ENCODE measurements at regions of chr1 and their contacts with region 1.

Region 1: DNA sequence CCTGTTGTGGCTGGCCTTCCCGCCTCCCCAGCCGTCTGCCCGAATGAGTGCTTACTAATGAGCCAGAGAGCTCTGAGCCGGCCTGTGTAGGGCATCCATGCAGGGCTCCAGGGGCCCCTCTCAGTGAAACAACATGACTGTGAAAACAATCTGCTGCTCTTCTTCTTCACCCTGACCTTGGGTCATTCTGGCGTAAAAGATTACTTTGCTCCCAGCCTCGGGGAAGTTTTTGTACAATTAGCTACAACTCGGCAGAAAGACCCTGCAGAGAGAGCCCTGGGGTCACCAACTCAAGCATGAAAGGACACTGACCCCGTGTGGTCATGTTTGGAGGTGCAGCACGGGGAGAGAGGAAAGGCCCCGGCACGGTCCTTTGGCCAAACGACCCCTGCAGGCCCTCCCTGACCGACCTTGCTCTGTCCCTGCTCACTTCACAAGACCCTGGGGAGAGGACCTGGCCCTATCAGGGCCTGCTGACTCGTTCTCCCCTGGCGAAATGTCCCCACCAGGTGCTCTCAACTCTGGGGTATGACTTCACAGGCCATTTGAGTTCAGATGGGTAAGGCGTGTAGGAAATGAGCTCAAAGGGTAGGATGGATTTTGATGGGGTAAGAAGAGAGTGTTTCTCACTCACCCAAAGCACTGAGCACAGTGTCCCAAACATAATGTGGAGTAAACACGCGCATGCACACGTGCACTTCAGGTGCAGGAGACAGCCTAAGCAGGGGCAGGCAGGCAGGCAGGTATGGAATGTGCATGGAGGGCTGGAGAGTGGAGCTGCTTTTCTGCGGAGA is 22.9 kb upstream of the FAM20B start:
- DNase-seq: peak in 9 of 10 donors; percentile 64 to 77 (median 72)
- H3K4me3 ChIP-seq: peak overlapping the region in 26 of 59 donors; percentile 2 to 47 (median 27)
- H3K27ac ChIP-seq: peak overlapping the region in 1 of 59 donors; percentile 44
- H3K27me3 ChIP-seq: no peaks in the 10 kb centered on the region
- CTCF ChIP-seq: peak; percentile 86 to 99 (median 95)

Region 2: GRCh38 chr1:178532392-178532791 is 470.4 kb before region 1 on chr1:
- intact Hi-C with region 1: loop called in 1 of 2 experiments (anchors 2 kb)
- DNase-seq: peak; percentile 77 to 91 (median 88)
- H3K4me3 ChIP-seq: peak overlapping the region in 19 of 59 donors; percentile 5 to 42 (median 19)
- H3K27ac ChIP-seq: no peak overlapping the region
- H3K27me3 ChIP-seq: peaks cover 0 to 4% (median 0%) of the 10 kb centered on the region in 45 donors
- CTCF ChIP-seq: peak; percentile 56 to 96 (median 90)

Region 3: GRCh38 chr1:178542560-178543356 is 460.0 kb before region 1 on chr1:
- intact Hi-C with region 1: loop called in 1 of 2 experiments (anchors 5 kb)
- DNase-seq: peak; percentile 75 to 94 (median 82)
- H3K4me3 ChIP-seq: peak overlapping the region; percentile 55 to 94 (median 82)
- H3K27ac ChIP-seq: peak overlapping the region in 54 of 59 donors; percentile 4 to 92 (median 78)
- H3K27me3 ChIP-seq: no peaks in the 10 kb centered on the region
- CTCF ChIP-seq: peak; percentile 83 to 99 (median 97)

Region 4: GRCh38 chr1:178768423-178768822 is 234.3 kb before region 1 on chr1:
- intact Hi-C with region 1: loop called in 1 of 2 experiments (anchors 2 kb)
- DNase-seq: no peak
- H3K4me3 ChIP-seq: no peak overlapping the region
- H3K27ac ChIP-seq: no peak overlapping the region
- H3K27me3 ChIP-seq: no peaks in the 10 kb centered on the region
- CTCF ChIP-seq: peak; percentile 52 to 86 (median 73)

Region 5: GRCh38 chr1:178774263-178774662 is 228.5 kb before region 1 on chr1:
- intact Hi-C with region 1: loop called (anchors 2 to 5 kb)
- DNase-seq: no peak
- H3K4me3 ChIP-seq: no peak overlapping the region
- H3K27ac ChIP-seq: no peak overlapping the region
- H3K27me3 ChIP-seq: no peaks in the 10 kb centered on the region
- CTCF ChIP-seq: peak; percentile 31 to 77 (median 55)

Region 6: DNA sequence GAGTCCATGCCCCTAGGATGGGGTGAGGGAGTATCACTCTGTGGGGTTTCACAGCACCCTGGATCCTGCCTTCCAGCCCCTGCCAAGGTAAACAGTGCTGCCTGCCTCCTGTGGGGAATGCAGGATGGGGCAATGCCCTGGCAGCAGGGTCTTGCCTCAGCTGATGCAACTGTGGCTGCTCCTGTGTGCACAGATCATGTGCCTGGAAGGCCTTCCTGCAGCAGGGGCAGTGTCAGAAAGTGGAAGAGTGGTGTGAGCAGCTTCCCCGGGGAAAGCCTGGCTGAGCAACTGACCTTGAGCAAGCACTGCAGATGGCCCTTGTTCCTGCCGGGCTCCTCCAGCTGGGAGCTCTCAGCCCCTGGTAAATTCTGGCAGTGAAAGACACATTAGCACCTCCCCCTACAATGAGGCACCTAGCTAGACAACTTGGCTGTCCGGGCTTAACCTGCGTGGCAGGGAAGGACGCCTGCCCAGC is 89.0 kb after region 1 on chr1:
- intact Hi-C with region 1: no loop called
- DNase-seq: peak in 1 of 10 donors; percentile 15
- H3K4me3 ChIP-seq: no peak overlapping the region
- H3K27ac ChIP-seq: peak overlapping the region in 38 of 59 donors; percentile 4 to 69 (median 46)
- H3K27me3 ChIP-seq: no peaks in the 10 kb centered on the region
- CTCF ChIP-seq: no peak

Region 7: DNA sequence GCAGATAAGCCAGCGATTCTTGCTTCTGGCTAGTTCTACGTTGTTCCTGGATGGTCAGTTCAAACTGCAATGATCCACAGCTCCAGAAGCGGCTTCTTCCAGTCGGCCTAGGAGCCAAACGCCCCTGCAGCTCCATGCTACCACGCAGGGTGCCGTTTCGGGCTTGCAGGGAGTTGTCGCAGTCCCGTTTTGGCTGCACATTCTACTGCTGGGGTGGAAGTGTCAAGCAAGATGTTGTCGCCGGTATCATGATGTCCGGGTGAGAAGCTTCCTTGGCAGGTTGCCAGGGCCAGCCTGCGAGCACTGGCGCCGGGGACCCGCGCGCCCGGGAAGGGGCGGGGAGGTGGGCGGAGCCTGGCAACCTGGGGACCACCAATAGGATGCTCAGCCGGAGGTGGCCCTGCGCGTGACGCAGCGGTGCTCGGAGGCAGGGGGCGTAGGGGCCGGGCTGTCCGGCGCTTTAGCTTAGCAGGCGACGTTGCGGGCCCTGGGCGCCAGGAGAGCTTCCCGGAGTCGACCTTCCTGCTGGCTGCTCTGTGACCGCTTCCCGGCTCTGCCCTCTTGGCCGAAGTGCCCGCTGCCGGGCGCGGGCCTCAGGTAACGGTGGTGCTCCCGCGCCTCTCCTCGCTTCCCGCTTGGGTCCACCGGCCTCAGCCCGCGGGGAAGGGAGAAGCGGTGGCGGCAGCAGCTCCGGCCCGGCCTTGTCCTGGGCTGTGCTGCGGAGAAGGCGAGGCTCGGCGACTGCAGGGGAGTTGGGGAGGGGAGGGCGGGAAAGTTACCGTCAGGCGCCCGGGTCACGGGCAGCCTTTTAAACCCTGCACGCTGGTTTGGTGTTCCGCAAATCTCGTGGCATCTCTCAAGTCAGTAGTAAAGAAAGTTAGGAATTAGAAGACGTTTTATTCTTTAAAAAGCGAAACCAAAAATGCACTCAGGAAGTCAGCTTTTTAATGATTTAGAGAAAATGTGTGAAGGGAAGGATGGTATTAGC is 290.9 kb after region 1 on chr1 and contains the start of gene SOAT1:
- intact Hi-C with region 1: no loop called
- DNase-seq: peak; percentile 88 to 98 (median 95)
- H3K4me3 ChIP-seq: peak within 1 kb of the TSS; percentile 64 to 96 (median 85)
- H3K27ac ChIP-seq: peak within 1 kb of the TSS; percentile 54 to 94 (median 85)
- H3K27me3 ChIP-seq: no peaks in the 10 kb centered on the region
- CTCF ChIP-seq: peak in 48 of 56 donors; percentile 3 to 66 (median 40)
- total RNA-seq, gene SOAT1: 10.1 to 31.3 (median 18.6) TPM